ENCODE measurements at regions of chr5 and their contacts with region 1.

Region 1: GRCh38 chr5:59660737-59661136 is 232.8 kb downstream of the PDE4D start:
- DNase-seq: peak; percentile 52
- H3K4me3 ChIP-seq: no peak overlapping the region
- H3K27ac ChIP-seq: no peak overlapping the region
- H3K4me1 ChIP-seq: peaks cover 21% of the 10 kb centered on the region
- H3K27me3 ChIP-seq: no peaks in the 10 kb centered on the region
- CTCF ChIP-seq: peak; percentile 22 to 27
- POLR2A ChIP-seq: no peak

Region 2: DNA sequence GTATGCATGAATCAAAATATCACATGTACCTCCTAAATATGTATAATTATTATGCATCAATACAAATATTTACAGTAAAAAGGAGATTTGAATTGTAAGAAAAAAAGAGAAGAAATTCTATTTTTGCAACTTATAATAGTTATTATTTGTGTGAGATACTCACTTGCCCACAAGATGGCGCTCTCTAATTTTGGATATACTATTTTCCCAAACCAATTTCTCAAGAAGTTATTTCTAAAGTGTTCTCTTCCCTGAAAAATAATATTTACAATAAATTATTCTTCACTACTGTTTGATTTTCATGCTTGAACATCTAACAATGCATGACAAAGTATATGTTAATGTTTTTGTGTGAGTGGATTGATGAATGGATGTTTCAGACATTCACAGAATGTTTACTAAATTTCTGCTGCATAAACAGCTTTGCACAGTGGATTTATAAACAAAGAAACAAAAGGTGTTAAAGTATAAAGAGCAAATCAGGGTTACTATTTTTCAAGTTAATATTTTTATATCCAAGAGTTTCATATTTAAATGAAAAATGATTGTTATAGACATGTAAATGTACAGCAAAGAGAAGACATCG is 270.6 kb before region 1 on chr5:
- CTCF ChIA-PET with region 1: interaction called, 22 read pairs
- POLR2A ChIA-PET with region 1: no interaction called
- dilution Hi-C with region 1: no loop called
- intact Hi-C with region 1: loop called (anchors 2 kb)
- DNase-seq: peak; percentile 40
- H3K4me3 ChIP-seq: no peak overlapping the region
- H3K27ac ChIP-seq: no peak overlapping the region
- H3K4me1 ChIP-seq: no peaks in the 10 kb centered on the region
- H3K27me3 ChIP-seq: no peaks in the 10 kb centered on the region
- CTCF ChIP-seq: peak; percentile 26 to 33
- POLR2A ChIP-seq: no peak

Region 3: DNA sequence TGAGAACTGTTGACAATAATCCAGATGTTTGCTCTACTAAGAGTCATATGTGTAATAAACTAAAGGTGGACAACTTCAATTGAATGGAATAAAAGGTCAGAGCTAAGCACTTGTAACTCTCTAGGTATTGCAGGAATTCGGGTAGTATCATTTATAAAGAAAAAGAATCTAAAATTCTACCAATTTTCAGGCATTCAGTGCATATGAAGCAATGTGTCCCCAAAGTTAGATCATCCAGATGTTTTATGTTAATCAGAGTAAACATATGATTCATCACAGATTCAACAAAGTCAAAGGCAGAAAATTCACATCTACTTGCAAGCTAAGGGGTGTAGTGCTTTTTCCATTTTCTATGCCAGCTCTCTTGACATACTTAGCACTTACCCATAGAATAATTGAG is 244.3 kb before region 1 on chr5:
- CTCF ChIA-PET with region 1: no interaction called
- POLR2A ChIA-PET with region 1: no interaction called
- dilution Hi-C with region 1: no loop called
- intact Hi-C with region 1: no loop called
- DNase-seq: no peak
- H3K4me3 ChIP-seq: no peak overlapping the region
- H3K27ac ChIP-seq: no peak overlapping the region
- H3K4me1 ChIP-seq: no peaks in the 10 kb centered on the region
- H3K27me3 ChIP-seq: no peaks in the 10 kb centered on the region
- CTCF ChIP-seq: no peak
- POLR2A ChIP-seq: no peak

Region 4: GRCh38 chr5:59525959-59526358 is 134.8 kb before region 1 on chr5:
- CTCF ChIA-PET with region 1: interaction called, 12 read pairs
- POLR2A ChIA-PET with region 1: no interaction called
- dilution Hi-C with region 1: no loop called
- intact Hi-C with region 1: loop called (anchors 5 kb)
- DNase-seq: peak; percentile 63
- H3K4me3 ChIP-seq: no peak overlapping the region
- H3K27ac ChIP-seq: peak overlapping the region; percentile 88
- H3K4me1 ChIP-seq: peaks cover 33% of the 10 kb centered on the region
- H3K27me3 ChIP-seq: no peaks in the 10 kb centered on the region
- CTCF ChIP-seq: peak in 1 of 2 donors; percentile 7
- POLR2A ChIP-seq: no peak

Region 5: GRCh38 chr5:59587489-59588337 is 73.0 kb before region 1 on chr5:
- CTCF ChIA-PET with region 1: interaction called, 3 read pairs
- POLR2A ChIA-PET with region 1: no interaction called
- dilution Hi-C with region 1: no loop called
- intact Hi-C with region 1: loop called (anchors 5 kb)
- DNase-seq: peak; percentile 55
- H3K4me3 ChIP-seq: no peak overlapping the region
- H3K27ac ChIP-seq: no peak overlapping the region
- H3K4me1 ChIP-seq: peaks cover 20% of the 10 kb centered on the region
- H3K27me3 ChIP-seq: no peaks in the 10 kb centered on the region
- CTCF ChIP-seq: peak in 1 of 2 donors; percentile 29
- POLR2A ChIP-seq: no peak

Region 6: DNA sequence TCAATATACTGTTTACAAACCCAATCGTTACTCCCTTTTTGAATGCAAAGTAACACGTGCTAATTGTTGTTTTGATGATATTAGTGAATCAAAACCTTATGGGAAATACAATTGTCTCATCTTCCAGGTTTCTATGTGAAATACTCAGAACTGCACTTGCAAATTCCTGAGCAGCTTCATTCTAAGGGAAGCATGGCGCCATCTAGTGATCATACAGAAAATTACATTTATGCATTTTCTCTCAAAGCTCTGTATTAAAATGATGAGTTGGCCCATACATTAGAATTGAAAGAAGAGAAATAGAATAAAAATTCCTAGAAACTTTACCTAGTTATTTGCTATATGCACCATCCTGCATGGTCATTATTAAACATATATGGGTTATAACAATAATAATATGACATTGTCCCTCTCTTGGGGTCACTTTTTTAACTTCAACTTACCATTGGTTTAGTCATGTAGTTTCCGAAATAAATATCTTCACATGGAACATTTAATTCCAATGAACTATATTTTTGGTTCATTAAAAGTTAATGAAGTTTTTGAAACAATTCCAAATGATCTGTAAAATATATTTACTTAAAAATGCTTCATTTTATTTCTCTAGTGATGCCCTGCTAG is 12.8 kb after region 1 on chr5:
- CTCF ChIA-PET with region 1: interaction called, 59 read pairs
- POLR2A ChIA-PET with region 1: no interaction called
- dilution Hi-C with region 1: no loop called
- intact Hi-C with region 1: no loop called
- DNase-seq: peak; percentile 66
- H3K4me3 ChIP-seq: no peak overlapping the region
- H3K27ac ChIP-seq: no peak overlapping the region
- H3K4me1 ChIP-seq: no peaks in the 10 kb centered on the region
- H3K27me3 ChIP-seq: no peaks in the 10 kb centered on the region
- CTCF ChIP-seq: peak; percentile 38 to 46
- POLR2A ChIP-seq: no peak

Region 7: DNA sequence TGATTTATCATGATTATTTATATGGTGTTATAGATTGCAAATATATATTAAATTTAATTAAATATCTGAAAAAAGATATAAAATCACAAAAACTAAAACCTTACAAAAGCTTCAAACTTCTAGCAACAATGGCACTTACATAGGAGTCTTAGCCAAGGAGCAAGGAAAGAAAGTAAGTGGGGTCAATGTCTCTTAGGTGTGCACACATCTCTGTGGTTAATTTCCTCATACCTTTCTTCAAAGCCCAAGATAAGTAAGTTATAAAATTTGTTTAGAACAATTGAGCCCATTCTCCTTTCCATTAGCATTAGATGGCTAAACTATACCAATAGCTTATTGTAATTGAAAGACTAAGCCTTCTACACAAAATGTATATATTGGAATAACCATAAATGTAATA is 394.4 kb after region 1 on chr5:
- CTCF ChIA-PET with region 1: no interaction called
- POLR2A ChIA-PET with region 1: no interaction called
- dilution Hi-C with region 1: no loop called
- intact Hi-C with region 1: no loop called
- DNase-seq: no peak
- H3K4me3 ChIP-seq: no peak overlapping the region
- H3K27ac ChIP-seq: no peak overlapping the region
- H3K4me1 ChIP-seq: no peaks in the 10 kb centered on the region
- H3K27me3 ChIP-seq: no peaks in the 10 kb centered on the region
- CTCF ChIP-seq: no peak
- POLR2A ChIP-seq: no peak